ENCODE measurements at regions of chr20 and their contacts with region 1.

Region 1: GRCh38 chr20:6767536-6768227 is at the start of gene BMP2:
- DNase-seq: no peak
- H3K4me3 Mint-ChIP-seq: peak within 1 kb of the TSS; percentile 30
- H3K27ac Mint-ChIP-seq: no peak within 1 kb of the TSS
- H3K4me1 Mint-ChIP-seq: no peaks in the 10 kb centered on the region
- H3K27me3 Mint-ChIP-seq: peaks cover 47% of the 10 kb centered on the region
- total RNA-seq, gene BMP2: 0.08 and 0.12 TPM in 2 replicates

Region 2: DNA sequence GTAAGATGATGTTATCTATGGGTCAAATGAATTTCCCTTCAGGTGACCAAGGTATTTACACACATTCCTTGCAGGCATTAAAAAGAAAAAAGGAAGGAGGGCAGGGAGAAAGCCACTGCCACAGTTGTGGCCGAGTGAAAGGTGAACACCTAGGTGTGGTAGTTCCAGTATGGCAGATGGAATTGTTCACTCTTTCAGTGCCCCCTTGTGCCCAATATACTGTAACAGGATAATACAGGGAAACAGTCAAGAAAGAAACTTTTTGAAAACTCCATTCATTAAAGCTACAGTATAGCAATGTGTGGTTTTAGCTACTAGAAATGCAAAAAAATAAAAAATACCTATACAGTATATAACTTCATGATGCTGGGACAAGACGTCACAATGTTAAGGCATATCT is 51.9 kb after region 1 on chr20:
- intact Hi-C with region 1: loop called (anchors 1 kb)
- DNase-seq: no peak
- H3K4me3 Mint-ChIP-seq: no peak overlapping the region
- H3K27ac Mint-ChIP-seq: no peak overlapping the region
- H3K4me1 Mint-ChIP-seq: no peaks in the 10 kb centered on the region
- H3K27me3 Mint-ChIP-seq: no peaks in the 10 kb centered on the region

Region 3: DNA sequence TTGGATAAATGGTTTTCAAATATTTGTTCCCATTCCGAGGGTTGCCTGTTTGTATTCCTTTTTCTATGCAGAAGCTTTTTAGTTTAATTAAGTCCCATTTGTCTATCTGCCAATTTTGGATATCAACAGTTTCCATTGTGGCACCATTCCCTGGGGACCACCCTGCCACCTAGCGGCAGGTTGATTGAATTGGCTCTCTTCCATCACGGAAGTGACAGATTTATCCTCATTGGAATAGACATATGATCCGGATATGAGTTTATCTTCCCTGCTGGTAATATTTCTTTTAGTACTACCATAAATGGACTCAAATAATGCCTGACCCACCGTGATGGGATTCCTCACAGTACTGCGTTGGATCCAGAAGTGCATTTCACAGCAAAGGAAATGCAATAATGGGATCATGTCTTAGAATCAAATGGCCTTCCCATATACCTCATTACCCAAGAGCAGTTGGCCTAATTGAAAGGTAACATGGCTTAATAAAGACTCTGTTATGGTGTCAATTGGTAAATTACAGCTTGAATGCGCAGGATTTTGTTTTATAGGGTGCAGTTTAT is 326.8 kb after region 1 on chr20:
- intact Hi-C with region 1: loop called (anchors 10 kb)
- DNase-seq: no peak
- H3K4me3 Mint-ChIP-seq: no peak overlapping the region
- H3K27ac Mint-ChIP-seq: no peak overlapping the region
- H3K4me1 Mint-ChIP-seq: no peaks in the 10 kb centered on the region
- H3K27me3 Mint-ChIP-seq: no peaks in the 10 kb centered on the region

Region 4: DNA sequence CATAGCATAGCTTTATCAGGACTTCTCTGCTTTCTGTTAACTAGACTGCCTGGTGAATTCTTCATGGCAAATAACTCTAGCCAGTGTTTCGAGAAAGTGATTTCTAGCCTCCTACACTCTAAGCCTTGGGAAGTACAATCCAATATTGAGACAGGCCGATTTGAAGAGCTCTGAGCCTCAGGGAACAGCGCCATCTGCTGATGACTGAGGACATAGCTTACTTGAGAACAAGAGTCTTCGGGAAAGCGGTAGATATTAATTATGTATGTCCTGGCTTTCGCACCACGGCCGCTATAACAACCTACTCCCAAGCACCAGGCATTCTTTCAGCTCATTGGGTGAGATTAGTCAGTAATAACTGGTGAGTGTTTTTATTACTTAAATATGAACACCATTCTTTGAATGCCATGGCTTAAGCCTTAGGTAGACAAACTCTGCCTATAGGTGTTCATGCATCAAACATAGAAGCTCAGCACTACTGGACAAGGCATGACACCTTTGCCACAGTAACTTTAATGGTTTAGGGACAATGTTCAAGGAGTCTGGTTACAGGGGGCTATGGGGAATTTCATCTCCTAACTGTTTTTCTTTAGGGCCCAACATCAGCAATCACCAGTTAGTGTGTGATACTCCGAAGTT is 518.4 kb after region 1 on chr20:
- intact Hi-C with region 1: loop called (anchors 10 kb)
- DNase-seq: peak; percentile 4
- H3K4me3 Mint-ChIP-seq: no peak overlapping the region
- H3K27ac Mint-ChIP-seq: no peak overlapping the region
- H3K4me1 Mint-ChIP-seq: no peaks in the 10 kb centered on the region
- H3K27me3 Mint-ChIP-seq: no peaks in the 10 kb centered on the region

Region 5: DNA sequence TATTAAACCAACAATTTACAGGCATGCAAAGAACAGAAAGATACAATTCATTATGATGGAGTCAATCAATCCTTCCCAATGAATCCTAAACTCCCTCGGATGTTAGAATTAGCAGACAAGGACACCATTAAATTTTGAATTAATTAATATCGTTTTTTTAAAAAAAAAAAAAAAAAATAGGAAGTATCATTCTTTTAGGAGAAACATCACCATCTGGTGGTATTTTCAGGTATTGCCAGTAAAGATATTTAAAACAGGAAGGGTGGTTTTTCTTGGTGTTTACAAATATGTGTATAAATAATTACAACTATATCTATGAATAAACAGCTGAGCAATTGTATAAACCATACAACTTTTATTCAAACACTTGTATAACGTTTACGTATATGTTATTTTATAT is 608.2 kb after region 1 on chr20:
- intact Hi-C with region 1: loop called (anchors 10 kb)
- DNase-seq: no peak
- H3K4me3 Mint-ChIP-seq: no peak overlapping the region
- H3K27ac Mint-ChIP-seq: no peak overlapping the region
- H3K4me1 Mint-ChIP-seq: no peaks in the 10 kb centered on the region
- H3K27me3 Mint-ChIP-seq: no peaks in the 10 kb centered on the region

Region 6: GRCh38 chr20:7859356-7859802 is 1091.7 kb after region 1 on chr20:
- intact Hi-C with region 1: loop called (anchors 2 kb)
- DNase-seq: no peak
- H3K4me3 Mint-ChIP-seq: no peak overlapping the region
- H3K27ac Mint-ChIP-seq: no peak overlapping the region
- H3K4me1 Mint-ChIP-seq: no peaks in the 10 kb centered on the region
- H3K27me3 Mint-ChIP-seq: peaks cover 3% of the 10 kb centered on the region

Measured in activated T-helper 1 cell treated with anti-CD3 and anti-CD28 coated beads, Interleukin-12 subunit alpha, Interleukin-12 subunit beta, Interleukin-2, Interleukin-4 antibody, amounts not matched to agents 30 ng/mL and 10 ng/mL and 1 ng/mL, durations not matched to agents 14 hours and 24 hours and 36 hours (primary cell).